Tibial artery (tissue), 4 donors: ENCODE measurements at regions of chr7 and their contacts with region 1.

Region 1: GRCh38 chr7:149771721-149772240 is 1.6 kb downstream of the ZNF467 start:
- DNase-seq: peak; percentile 87 to 96
- H3K4me3 ChIP-seq: peak overlapping the region; percentile 56 to 73
- H3K27ac ChIP-seq: peak overlapping the region; percentile 33 to 47
- H3K4me1 ChIP-seq: peaks cover 0 to 30% (median 22%) of the 10 kb centered on the region in 4 donors
- H3K27me3 ChIP-seq: peaks cover 0 to 8% of the 10 kb centered on the region in 2 donors
- CTCF ChIP-seq: no peak

Region 2: GRCh38 chr7:149714910-149715471 is 56.8 kb before region 1 on chr7:
- intact Hi-C with region 1: loop called (anchors 5 kb)
- DNase-seq: no peak
- H3K4me3 ChIP-seq: peak overlapping the region; percentile 63 to 67
- H3K27ac ChIP-seq: peak overlapping the region; percentile 74 to 80
- H3K4me1 ChIP-seq: peaks cover 4 to 27% (median 22%) of the 10 kb centered on the region in 4 donors
- H3K27me3 ChIP-seq: no peaks in the 10 kb centered on the region
- CTCF ChIP-seq: no peak

Region 3: DNA sequence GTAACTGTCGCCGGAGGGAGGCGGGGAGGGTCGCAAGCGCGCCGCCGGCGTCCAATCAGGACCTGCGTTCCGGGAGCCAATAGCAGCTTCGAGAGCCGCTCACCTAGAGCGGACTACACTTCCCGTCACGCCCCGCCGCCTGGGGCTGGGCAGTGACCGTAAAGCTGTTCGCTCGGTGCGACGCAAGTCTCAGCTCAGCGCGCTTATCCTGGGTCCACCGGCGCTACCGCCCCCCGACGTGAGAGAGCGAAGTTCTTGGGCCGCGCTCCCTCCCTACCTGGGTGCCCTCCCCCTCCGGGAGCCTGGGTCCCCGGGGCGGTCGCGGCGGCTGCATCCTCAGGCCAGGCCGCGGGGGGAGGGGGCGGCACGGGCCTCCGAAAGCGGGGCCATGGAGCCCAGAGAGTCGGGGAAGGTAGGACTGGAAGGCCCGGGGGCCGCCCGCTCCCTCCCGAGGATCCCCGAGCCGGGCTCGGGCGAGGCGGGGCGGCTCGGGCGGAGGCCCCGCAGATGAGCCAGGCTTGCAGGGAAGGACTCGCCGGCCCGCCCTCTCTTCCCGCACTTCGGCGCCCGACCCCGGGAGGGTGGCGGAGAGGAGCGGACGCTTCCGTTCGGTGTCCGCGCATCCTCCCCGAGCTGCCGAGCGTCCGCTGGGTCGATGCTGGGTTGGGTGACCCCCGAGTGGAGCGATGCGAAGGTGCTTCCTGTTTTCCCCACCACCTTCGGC is 66.6 kb after region 1 on chr7 and contains the start of gene ZNF862:
- intact Hi-C with region 1: loop called (anchors 2 kb)
- DNase-seq: peak; percentile 98 to 99
- H3K4me3 ChIP-seq: peak within 1 kb of the TSS; percentile 83 to 91
- H3K27ac ChIP-seq: peak within 1 kb of the TSS; percentile 83 to 91
- H3K4me1 ChIP-seq: peaks cover 0 to 14% (median 11%) of the 10 kb centered on the region in 4 donors
- H3K27me3 ChIP-seq: no peaks in the 10 kb centered on the region
- CTCF ChIP-seq: no peak

Region 4: GRCh38 chr7:150404805-150405583 is 633.2 kb after region 1 on chr7:
- intact Hi-C with region 1: loop called (anchors 10 kb)
- DNase-seq: peak; percentile 88 to 93
- H3K4me3 ChIP-seq: peak overlapping the region; percentile 74 to 93
- H3K27ac ChIP-seq: peak overlapping the region; percentile 97 to 98
- H3K4me1 ChIP-seq: peaks cover 0 to 29% (median 23%) of the 10 kb centered on the region in 4 donors
- H3K27me3 ChIP-seq: no peaks in the 10 kb centered on the region
- CTCF ChIP-seq: no peak